Ascending aorta (tissue), 2 donors: ENCODE measurements at regions of chr15 and their contacts with region 1.

Region 1: DNA sequence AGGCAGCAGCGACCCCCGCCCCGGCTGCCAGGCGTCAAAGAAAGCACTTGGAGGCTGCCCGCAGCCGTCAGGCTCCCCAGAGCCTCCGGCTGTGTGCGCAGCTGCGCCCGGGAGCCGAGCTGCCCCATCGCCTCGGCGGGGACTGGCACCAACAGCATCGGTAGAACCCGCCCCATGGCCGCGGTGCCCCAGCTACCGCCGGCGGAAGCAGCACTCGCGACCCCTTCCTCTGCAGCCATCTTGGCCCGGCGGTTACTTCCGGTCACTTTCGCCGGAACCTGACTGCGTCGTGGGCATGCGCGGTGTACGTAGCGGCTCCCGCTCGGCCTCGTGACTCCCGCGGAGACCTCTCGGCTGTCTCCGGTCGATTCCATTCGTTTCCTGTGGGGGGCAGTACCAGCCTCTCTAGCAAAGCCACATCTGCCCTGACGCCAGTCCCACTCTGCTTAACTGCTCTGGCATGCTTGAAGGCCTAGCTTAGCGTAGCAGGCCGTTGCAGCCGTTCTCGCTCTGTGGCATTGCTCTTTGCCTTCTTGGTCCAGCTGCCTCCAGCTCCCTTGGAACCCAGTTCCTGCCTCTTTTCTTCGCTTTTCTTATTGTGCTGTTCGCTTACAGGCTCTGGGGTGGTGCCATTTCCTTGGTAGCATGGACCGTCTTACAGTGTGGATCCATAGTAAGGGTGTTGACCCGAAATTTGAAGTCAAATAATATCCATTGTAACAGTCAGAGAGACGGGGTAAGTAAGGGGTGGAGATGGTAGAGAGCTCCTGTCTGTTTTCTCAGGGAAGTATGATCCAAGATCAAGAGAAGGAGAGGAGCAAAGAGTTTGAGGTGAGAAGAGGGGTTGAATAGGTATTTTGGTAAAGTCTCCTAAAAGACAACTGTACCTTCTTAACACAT is at the start of gene SPG11:
- DNase-seq: peak; percentile 93 to 99
- H3K4me3 ChIP-seq: peak within 1 kb of the TSS; percentile 77 to 95
- H3K27ac ChIP-seq: peak within 1 kb of the TSS; percentile 96 to 98
- H3K4me1 ChIP-seq: peaks cover 0 to 17% of the 10 kb centered on the region in 2 donors
- H3K27me3 ChIP-seq: no peaks in the 10 kb centered on the region
- CTCF ChIP-seq: peak; percentile 90 to 97 (median 95)
- total RNA-seq, gene SPG11: 21.1 TPM

Region 2: GRCh38 chr15:44682211-44682610 is 18.6 kb after region 1 on chr15:
- intact Hi-C with region 1: no loop called
- DNase-seq: no peak
- H3K4me3 ChIP-seq: no peak overlapping the region
- H3K27ac ChIP-seq: no peak overlapping the region
- H3K4me1 ChIP-seq: no peaks in the 10 kb centered on the region
- H3K27me3 ChIP-seq: no peaks in the 10 kb centered on the region
- CTCF ChIP-seq: no peak

Region 3: GRCh38 chr15:44711356-44712107 is 47.9 kb after region 1 on chr15 and contains the start of gene B2M:
- intact Hi-C with region 1: loop called (anchors 1 kb)
- DNase-seq: peak; percentile 90 to 98
- H3K4me3 ChIP-seq: peak within 1 kb of the TSS; percentile 87 to 90
- H3K27ac ChIP-seq: peak within 1 kb of the TSS; percentile 97 to 99
- H3K4me1 ChIP-seq: peaks cover 4 to 15% of the 10 kb centered on the region in 2 donors
- H3K27me3 ChIP-seq: no peaks in the 10 kb centered on the region
- CTCF ChIP-seq: no peak
- total RNA-seq, gene B2M: 3,395 TPM

Region 4: GRCh38 chr15:44738340-44738984 is 74.8 kb after region 1 on chr15:
- intact Hi-C with region 1: loop called (anchors 1 kb)
- DNase-seq: no peak
- H3K4me3 ChIP-seq: no peak overlapping the region
- H3K27ac ChIP-seq: no peak overlapping the region
- H3K4me1 ChIP-seq: peaks cover 0 to 7% of the 10 kb centered on the region in 2 donors
- H3K27me3 ChIP-seq: no peaks in the 10 kb centered on the region
- CTCF ChIP-seq: peak; percentile 58 to 78 (median 76)